Right lobe of liver (tissue), 6 donors: ENCODE measurements at regions of chr14 and their contacts with region 1.

Region 1: GRCh38 chr14:103628684-103629502 is at the start of gene KLC1:
- DNase-seq: peak; percentile 88 to 89 (median 89)
- ATAC-seq: peak; percentile 74 to 86 (median 81)
- H3K4me3 ChIP-seq: peak within 1 kb of the TSS; percentile 95 to 100 (median 96)
- H3K27ac ChIP-seq: peak within 1 kb of the TSS; percentile 86 to 95 (median 94)
- H3K4me1 ChIP-seq: peaks cover 0 to 18% (median 7%) of the 10 kb centered on the region in 4 donors
- H3K27me3 ChIP-seq: no peaks in the 10 kb centered on the region
- CTCF ChIP-seq: no peak
- POLR2A ChIP-seq: peak; percentile 75
- total RNA-seq, gene KLC1: 45.8 to 78.9 (median 58.0) TPM

Region 2: DNA sequence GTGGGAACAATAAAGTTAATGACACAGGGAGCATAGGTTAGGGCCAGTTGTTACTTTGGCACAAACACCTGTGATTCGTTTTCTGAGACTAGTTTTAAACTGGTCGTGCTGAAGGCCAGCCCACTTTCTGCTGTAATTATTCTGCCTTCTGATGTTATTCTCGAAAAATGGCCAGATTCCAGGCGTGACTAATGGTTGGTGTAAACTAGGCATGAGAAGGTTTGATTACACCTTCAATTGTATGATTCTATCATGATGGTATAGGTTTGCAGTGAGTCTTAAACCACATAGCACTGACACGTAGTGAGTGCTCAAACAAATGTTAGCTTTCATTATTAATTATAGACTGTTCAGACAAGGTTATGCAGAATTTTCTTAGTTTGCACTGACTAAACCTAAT is 145.3 kb before region 1 on chr14:
- intact Hi-C with region 1: no loop called
- DNase-seq: no peak
- ATAC-seq: no peak
- H3K4me3 ChIP-seq: no peak overlapping the region
- H3K27ac ChIP-seq: no peak overlapping the region
- H3K4me1 ChIP-seq: peaks cover 0 to 7% (median 0%) of the 10 kb centered on the region in 4 donors
- H3K27me3 ChIP-seq: no peaks in the 10 kb centered on the region
- CTCF ChIP-seq: no peak
- POLR2A ChIP-seq: no peak

Region 3: GRCh38 chr14:103576371-103577024 is 52.4 kb before region 1 on chr14:
- intact Hi-C with region 1: loop called in 1 of 2 experiments (anchors 10 kb)
- DNase-seq: peak; percentile 94 to 96 (median 95)
- ATAC-seq: peak; percentile 98 to 99 (median 98)
- H3K4me3 ChIP-seq: peak overlapping the region in 1 of 3 donors; percentile 17
- H3K27ac ChIP-seq: peak overlapping the region in 1 of 3 donors; percentile 37
- H3K4me1 ChIP-seq: peaks cover 0 to 15% (median 7%) of the 10 kb centered on the region in 4 donors
- H3K27me3 ChIP-seq: no peaks in the 10 kb centered on the region
- CTCF ChIP-seq: no peak
- POLR2A ChIP-seq: no peak